Heart right ventricle (tissue), 16 donors: ENCODE measurements at regions of chr19 and their contacts with region 1.

Region 1: DNA sequence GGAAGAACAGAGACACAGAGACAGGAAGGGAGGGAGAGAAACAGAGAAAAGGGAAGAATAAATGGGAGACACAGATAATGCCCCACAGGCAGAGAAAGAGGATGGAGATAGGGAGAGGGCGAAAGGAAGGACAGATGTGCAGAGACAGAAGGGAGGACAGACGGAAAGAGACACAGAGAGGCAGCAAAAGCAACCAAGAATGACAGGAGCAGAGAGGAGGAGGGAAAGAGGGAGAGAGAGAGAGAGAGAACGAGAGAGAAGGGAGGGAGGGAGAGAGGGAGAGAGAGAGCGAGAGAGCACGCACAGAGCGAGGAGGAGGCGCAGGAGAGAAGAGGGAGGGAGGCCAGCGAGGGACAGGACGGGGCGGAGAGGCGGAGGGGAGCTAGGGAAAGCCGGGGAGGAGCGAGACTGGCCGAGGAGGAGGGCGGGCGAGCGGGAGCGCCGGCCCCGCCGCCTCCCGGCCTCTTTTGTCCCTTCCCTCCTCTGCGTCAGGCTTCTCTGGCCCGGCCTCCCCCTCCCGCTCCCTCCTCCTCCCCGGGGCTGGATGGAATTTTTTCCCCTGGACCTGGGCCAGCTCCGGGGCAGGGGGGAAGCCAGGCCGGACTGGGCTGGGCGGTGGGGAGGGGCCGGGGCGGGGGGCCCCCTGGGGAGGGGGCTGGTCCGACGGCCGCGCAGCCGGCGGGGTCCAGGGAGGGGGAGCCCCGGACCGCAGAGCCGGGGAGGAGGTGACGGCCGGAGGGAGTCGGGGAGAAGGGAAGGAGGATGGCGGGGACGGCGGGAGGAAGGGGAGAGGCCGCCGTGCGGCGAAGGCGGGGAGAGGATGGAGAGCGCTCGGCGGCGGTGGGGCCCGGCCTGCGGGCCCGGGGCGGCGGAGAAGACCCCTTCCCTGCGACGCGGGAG is 4.2 kb upstream of the SPACA6 start:
- DNase-seq: peak; percentile 93 to 96
- ATAC-seq: peak; percentile 88 to 94 (median 89)
- H3K4me3 ChIP-seq: peak overlapping the region; percentile 63 to 100 (median 90)
- H3K27ac ChIP-seq: peak overlapping the region; percentile 93 to 100 (median 97)
- H3K4me1 ChIP-seq: peaks cover 8 to 51% (median 40%) of the 10 kb centered on the region in 9 donors
- H3K27me3 ChIP-seq: peaks cover 0 to 30% (median 0%) of the 10 kb centered on the region in 7 donors
- CTCF ChIP-seq: peak in 4 of 9 donors; percentile 10 to 31 (median 24)

Region 2: GRCh38 chr19:51637362-51637978 is 51.5 kb before region 1 on chr19:
- intact Hi-C with region 1: no loop called
- DNase-seq: no peak
- ATAC-seq: no peak
- H3K4me3 ChIP-seq: no peak overlapping the region
- H3K27ac ChIP-seq: no peak overlapping the region
- H3K4me1 ChIP-seq: peaks cover 0 to 11% (median 0%) of the 10 kb centered on the region in 9 donors
- H3K27me3 ChIP-seq: peaks cover 0 to 12% (median 0%) of the 10 kb centered on the region in 7 donors
- CTCF ChIP-seq: peak in 6 of 9 donors; percentile 20 to 62 (median 32)

Region 3: DNA sequence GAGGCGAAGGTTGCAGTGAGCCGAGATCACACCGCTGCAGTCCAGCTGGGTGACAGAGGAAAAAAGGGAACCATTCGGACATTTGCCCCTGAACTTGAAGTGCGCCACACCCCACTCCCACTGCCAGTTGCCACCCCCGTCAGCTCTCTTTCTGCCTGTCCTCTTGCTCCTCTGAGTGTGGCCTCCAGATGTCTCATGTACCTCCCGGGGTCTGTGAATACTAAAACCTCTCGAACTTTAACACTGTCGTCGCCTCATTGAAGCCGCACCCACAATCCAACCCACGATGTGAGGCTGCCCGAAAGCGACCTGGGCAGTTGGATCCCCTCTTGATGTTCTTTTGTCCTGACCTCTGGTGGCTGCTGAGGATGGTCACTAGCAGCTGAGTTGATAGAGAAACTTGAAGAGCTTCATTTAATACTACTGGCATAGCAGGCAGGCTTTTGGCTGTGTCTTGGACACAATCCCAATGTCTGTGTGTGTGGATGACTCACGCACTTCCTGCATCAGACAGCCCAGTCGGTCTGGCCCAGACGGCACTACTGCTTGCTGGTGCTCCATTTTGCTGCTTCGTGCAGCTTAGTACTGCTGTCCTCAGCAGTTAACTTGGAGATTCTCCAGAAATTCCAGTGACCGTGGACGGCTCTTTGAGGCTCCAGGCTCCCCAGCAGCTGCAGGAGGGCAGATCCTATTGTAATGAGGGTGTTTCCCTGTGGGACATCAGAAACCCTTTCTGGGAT is 110.3 kb after region 1 on chr19:
- intact Hi-C with region 1: loop called in 3 of 10 experiments (anchors 5 to 10 kb)
- DNase-seq: peak; percentile 82 to 90
- ATAC-seq: peak; percentile 94 to 97 (median 96)
- H3K4me3 ChIP-seq: peak overlapping the region in 7 of 10 donors; percentile 7 to 52 (median 19)
- H3K27ac ChIP-seq: peak overlapping the region; percentile 87 to 98 (median 94)
- H3K4me1 ChIP-seq: peaks cover 13 to 75% (median 36%) of the 10 kb centered on the region in 9 donors
- H3K27me3 ChIP-seq: no peaks in the 10 kb centered on the region
- CTCF ChIP-seq: peak in 6 of 9 donors; percentile 13 to 47 (median 31)